Activated CD8-positive, alpha-beta T cell treated with anti-CD3 and anti-CD28 coated beads for 36 hours (primary cell): ENCODE measurements at regions of chr7 and their contacts with region 1.

Region 1: GRCh38 chr7:18638594-18639452 is 143.3 kb downstream of the HDAC9 start:
- DNase-seq: peak; percentile 60
- ATAC-seq: peak; percentile 79
- H3K4me3 Mint-ChIP-seq: no peak overlapping the region
- H3K27ac Mint-ChIP-seq: peak overlapping the region; percentile 82
- H3K4me1 Mint-ChIP-seq: peaks cover 8% of the 10 kb centered on the region
- H3K27me3 Mint-ChIP-seq: no peaks in the 10 kb centered on the region
- CTCF ChIP-seq: no peak

Region 2: DNA sequence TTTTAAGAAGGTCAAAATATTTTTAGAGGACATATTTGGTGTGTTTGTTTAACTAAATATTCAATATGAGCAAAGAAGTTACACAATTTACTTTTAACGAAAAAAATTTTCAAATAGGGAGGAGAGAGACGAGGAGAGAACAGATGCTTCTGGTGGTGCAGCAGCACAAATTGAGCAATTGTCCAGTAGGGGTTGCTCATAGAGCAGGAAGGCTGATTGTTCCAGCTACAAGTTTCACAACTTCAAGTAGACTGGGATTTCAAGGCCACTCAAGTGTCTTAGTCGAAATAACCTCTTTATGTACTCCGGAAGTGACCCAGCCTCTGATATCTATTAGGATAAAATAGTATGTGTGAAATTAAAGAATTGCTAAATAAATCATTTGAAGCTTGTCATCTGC is 54.6 kb after region 1 on chr7:
- CTCF ChIA-PET with region 1: no interaction called
- POLR2A ChIA-PET with region 1: no interaction called
- intact Hi-C with region 1: loop called (anchors 10 kb)
- DNase-seq: no peak
- ATAC-seq: no peak
- H3K4me3 Mint-ChIP-seq: no peak overlapping the region
- H3K27ac Mint-ChIP-seq: no peak overlapping the region
- H3K4me1 Mint-ChIP-seq: no peaks in the 10 kb centered on the region
- H3K27me3 Mint-ChIP-seq: no peaks in the 10 kb centered on the region
- CTCF ChIP-seq: no peak